ENCODE measurements at regions of chr20 and their contacts with region 1.

Region 1: GRCh38 chr20:63178889-63179686 is 36.8 kb downstream of the YTHDF1 start:
- DNase-seq: peak; percentile 60
- H3K4me3 ChIP-seq: no peak overlapping the region
- H3K27ac ChIP-seq: no peak overlapping the region
- H3K4me1 ChIP-seq: no peaks in the 10 kb centered on the region
- H3K27me3 ChIP-seq: peaks cover 59% of the 10 kb centered on the region
- CTCF ChIP-seq: peak; percentile 75

Region 2: GRCh38 chr20:62549499-62550086 is 629.5 kb before region 1 on chr20:
- CTCF ChIA-PET with region 1: no interaction called
- POLR2A ChIA-PET with region 1: no interaction called
- intact Hi-C with region 1: no loop called
- DNase-seq: no peak
- H3K4me3 ChIP-seq: no peak overlapping the region
- H3K27ac ChIP-seq: no peak overlapping the region
- H3K4me1 ChIP-seq: peaks cover 6% of the 10 kb centered on the region
- H3K27me3 ChIP-seq: peaks cover 57% of the 10 kb centered on the region
- CTCF ChIP-seq: peak; percentile 42

Region 3: GRCh38 chr20:62768481-62769287 is 410.4 kb before region 1 on chr20:
- CTCF ChIA-PET with region 1: no interaction called
- POLR2A ChIA-PET with region 1: no interaction called
- intact Hi-C with region 1: no loop called
- DNase-seq: peak; percentile 63
- H3K4me3 ChIP-seq: peak overlapping the region; percentile 76
- H3K27ac ChIP-seq: peak overlapping the region; percentile 95
- H3K4me1 ChIP-seq: peaks cover 61% of the 10 kb centered on the region
- H3K27me3 ChIP-seq: no peaks in the 10 kb centered on the region
- CTCF ChIP-seq: no peak

Region 4: DNA sequence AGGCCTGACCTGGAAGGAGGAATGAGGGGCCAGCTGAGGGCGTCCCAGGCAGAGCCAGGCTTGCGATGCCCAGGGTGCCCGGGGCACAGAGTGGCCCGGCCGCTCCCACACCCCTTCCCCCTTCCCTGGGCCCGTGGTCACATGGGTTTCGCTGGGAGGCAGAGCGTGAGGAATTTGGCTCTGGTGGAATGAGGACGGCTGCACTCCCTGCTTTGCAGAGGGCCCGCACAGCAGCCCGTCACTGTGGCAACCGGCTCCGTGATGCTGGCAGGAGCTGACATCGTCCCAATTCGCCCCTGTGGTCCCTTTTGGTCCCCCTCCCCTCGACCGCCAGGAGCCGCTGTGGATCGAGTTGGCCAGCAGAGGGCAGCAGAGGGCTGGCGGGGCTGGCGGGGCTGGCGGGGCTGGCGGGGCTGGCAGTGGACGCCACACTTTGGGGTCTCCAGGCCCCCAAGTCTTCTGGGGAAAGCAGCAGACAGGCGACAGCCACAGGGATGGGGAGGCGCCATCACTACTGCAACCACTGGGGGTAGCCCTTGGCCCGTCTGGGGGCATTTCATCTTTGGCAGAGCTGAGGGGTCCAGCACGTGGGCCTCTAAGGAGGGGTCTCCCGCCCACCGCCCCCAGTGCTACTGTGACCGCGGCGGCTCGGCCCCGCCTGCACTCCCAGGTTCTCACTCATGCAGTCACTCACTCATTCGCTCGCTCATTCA is 122.7 kb before region 1 on chr20:
- CTCF ChIA-PET with region 1: interaction called, 3 read pairs
- POLR2A ChIA-PET with region 1: no interaction called
- intact Hi-C with region 1: loop called (anchors 1 kb)
- DNase-seq: peak; percentile 61
- H3K4me3 ChIP-seq: no peak overlapping the region
- H3K27ac ChIP-seq: no peak overlapping the region
- H3K4me1 ChIP-seq: no peaks in the 10 kb centered on the region
- H3K27me3 ChIP-seq: peaks cover 18% of the 10 kb centered on the region
- CTCF ChIP-seq: peak; percentile 97